Thyroid gland (tissue), 4 donors: ENCODE measurements at regions of chr5 and their contacts with region 1.

Region 1: DNA sequence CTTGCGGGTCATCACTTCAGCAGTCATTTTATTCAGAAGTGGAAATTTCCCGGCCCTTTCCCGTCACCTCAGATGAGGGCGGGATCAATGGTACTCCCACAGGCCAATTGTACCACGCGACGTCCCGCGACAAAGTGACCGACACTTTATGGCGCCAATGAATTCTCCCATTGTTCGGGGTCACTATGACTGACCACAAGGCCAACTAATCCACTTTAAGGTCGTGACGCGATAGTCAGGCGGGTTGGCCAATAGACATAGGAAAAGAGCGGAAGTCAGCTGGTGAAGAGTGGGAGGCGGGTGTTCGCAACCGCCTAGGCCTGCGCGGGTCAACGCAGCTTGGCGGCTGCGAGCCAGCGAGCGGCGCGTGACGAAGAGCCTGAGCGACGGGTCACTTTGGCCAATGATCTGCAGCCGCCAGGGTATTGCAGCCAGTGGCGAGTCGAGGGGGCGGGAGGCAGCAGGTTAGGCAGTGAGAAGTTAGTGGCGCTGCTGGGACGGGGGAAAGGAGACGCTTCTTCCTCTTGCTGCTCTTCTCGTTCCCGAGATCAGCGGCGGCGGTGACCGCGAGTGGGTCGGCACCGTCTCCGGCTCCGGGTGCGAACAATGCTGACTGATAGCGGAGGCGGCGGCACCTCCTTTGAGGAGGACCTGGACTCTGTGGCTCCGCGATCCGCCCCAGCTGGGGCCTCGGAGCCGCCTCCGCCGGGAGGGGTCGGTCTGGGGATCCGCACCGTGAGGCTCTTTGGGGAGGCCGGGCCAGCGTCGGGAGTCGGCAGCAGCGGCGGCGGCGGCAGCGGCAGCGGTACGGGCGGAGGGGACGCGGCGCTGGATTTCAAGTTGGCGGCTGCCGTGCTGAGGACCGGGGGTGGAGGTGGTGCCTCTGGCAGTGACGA is at the start of gene ANKHD1:
- DNase-seq: peak; percentile 99 to 100
- H3K4me3 ChIP-seq: peak within 1 kb of the TSS; percentile 85 to 100 (median 99)
- H3K27ac ChIP-seq: peak within 1 kb of the TSS; percentile 95 to 98 (median 97)
- H3K4me1 ChIP-seq: peaks cover 30 to 31% of the 10 kb centered on the region in 2 donors
- H3K27me3 ChIP-seq: no peaks in the 10 kb centered on the region
- CTCF ChIP-seq: no peak
- POLR2A ChIP-seq: peak; percentile 87 to 99
- total RNA-seq, gene ANKHD1: 148 to 247 (median 163) TPM

Region 2: DNA sequence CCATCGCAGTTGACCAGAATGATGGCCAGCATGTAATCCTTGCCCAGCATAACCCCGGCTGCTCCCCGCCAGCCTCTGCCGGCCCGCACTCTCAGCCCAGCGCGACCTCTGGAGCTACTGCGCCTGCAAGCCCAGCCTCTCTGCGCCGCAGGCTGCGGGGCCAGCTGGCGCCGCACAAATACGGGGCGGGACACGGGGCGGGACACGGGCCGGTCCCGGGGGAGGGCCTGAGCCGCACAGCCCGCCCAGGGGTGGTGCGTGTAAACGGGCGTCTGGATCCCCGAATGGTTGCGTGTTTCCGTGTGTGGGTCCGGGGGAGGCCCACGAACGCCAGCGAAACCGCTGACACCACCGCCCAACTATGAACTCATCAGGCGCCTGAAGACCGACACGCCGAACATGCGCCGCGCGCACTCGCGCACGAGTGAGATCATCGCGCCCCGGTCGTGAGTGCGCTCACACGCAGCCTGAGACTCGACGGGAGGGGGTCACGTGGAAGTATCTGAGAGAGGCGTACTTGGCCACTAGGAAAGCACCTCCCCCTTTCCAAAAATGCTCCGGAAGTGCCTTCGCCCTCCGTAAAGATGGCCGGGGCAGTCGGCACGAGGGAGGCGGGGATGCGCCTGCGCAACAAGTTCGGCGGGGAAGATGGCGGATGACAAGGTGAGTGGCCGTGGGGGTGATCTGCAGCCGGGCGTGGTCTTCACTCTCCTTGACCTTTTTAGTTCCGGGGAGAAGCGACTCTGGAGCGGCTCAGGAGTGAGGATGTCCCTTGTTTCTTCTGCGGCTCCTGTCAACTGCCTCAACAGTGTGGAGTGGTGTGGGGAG is 162.8 kb after region 1 on chr5 and contains the starts of genes APBB3 and SLC35A4:
- intact Hi-C with region 1: loop called (anchors 5 kb)
- DNase-seq: peak; percentile 97 to 98
- H3K4me3 ChIP-seq: peak within 1 kb of the TSS; percentile 53 to 89 (median 59)
- H3K27ac ChIP-seq: peak within 1 kb of the TSS; percentile 93 to 97 (median 96)
- H3K4me1 ChIP-seq: peaks cover 25 to 37% of the 10 kb centered on the region in 2 donors
- H3K27me3 ChIP-seq: no peaks in the 10 kb centered on the region
- CTCF ChIP-seq: peak in 1 of 6 experiments; percentile 20
- POLR2A ChIP-seq: peak; percentile 41 to 87
- total RNA-seq, gene APBB3: 20.2 to 33.5 (median 26.1) TPM
- total RNA-seq, gene SLC35A4: 64.2 to 114 (median 74.0) TPM

Region 3: DNA sequence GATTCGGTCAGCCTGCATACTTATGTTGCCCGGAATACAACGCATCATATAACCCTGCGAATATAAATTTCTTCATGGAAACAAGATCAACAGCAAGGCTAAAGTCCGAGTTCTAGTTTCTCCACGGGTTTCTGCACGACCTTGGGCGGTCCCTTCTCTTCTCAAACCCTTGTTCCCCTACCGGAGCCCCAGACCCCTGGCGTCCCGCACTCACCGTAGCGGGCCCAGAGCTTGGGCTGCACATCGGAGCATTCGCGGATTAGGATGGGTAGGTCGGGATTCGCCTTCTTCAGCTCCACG is 245.4 kb after region 1 on chr5:
- intact Hi-C with region 1: loop called (anchors 5 kb)
- DNase-seq: no peak
- H3K4me3 ChIP-seq: peak overlapping the region; percentile 37 to 83 (median 71)
- H3K27ac ChIP-seq: peak overlapping the region; percentile 7 to 71 (median 42)
- H3K4me1 ChIP-seq: peaks cover 15 to 16% of the 10 kb centered on the region in 2 donors
- H3K27me3 ChIP-seq: no peaks in the 10 kb centered on the region
- CTCF ChIP-seq: no peak
- POLR2A ChIP-seq: no peak